ENCODE measurements at regions of chr2 and their contacts with region 1.

Region 1: DNA sequence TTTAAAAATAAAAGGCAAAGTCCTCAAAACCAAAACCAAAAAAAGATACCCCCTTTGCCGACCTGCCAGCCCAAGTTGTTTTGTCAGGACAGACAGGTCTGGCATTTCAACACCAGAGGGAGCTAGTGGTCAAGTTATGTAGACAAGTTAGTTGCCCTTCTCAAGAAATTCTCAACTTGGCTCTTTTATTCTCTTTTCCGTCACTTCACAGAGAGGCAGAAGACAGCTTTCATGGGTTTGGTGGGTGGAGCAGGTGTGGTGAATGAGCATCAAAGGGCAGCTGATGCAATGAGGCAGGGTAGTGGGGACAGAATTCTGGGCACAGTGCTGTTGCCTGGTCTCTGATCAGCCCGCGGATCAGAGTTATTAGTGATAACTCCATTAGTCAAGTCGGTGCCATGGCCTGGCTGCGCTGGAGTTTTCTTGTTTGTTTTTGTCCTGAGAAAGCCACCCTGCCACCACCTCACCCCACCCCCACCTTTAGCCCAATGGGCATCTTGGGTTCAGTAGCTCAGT is 303.7 kb upstream of the EPAS1 start:
- DNase-seq: peak in 4 of 5 donors; percentile 42 to 67 (median 50)
- ATAC-seq: peak in 3 of 4 donors; percentile 44 to 67 (median 66)
- H3K4me3 ChIP-seq: no peak overlapping the region
- H3K27ac ChIP-seq: no peak overlapping the region
- H3K4me1 ChIP-seq: peaks cover 0 to 22% (median 14%) of the 10 kb centered on the region in 12 donors
- H3K27me3 ChIP-seq: no peaks in the 10 kb centered on the region
- CTCF ChIP-seq: peak; percentile 76 to 88 (median 83)
- POLR2A ChIP-seq: no peak

Region 2: GRCh38 chr2:46461011-46461674 is 467.6 kb after region 1 on chr2:
- intact Hi-C with region 1: loop called in 8 of 10 experiments (anchors 1 to 2 kb)
- DNase-seq: peak; percentile 69 to 87 (median 78)
- ATAC-seq: peak; percentile 34 to 75 (median 58)
- H3K4me3 ChIP-seq: no peak overlapping the region
- H3K27ac ChIP-seq: peak overlapping the region; percentile 30 to 74 (median 58)
- H3K4me1 ChIP-seq: peaks cover 7 to 40% (median 20%) of the 10 kb centered on the region in 12 donors
- H3K27me3 ChIP-seq: no peaks in the 10 kb centered on the region
- CTCF ChIP-seq: peak; percentile 98 to 100 (median 99)
- POLR2A ChIP-seq: no peak

Region 3: DNA sequence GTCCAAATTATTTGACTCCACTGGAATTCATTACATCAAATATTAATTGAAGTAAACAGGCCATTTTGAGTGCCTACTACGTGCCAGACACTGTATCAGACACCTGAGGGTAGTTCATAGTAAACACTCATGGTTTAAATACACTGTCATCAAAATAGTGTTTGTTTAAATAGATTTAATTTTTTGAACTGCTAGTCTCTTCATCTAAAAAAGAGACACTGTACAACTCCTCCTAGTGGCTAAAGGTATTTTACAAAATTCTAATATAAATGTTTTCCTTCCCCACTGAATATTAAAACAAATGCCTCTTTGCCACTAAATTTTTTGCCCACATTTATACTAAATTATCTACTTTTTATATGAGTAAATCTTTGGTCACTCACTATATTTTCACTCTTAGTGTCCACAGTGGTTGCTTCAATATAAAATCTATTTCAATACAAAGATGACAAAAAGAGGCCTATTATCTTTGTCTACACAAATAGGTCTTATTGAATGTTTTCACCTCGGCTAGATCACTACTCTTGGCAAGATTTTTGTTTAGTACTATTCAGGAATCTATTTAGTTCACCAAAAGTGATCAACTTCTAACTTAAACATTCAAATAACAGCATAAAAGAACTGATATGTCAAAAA is 607.9 kb after region 1 on chr2:
- intact Hi-C with region 1: loop called in 1 of 10 experiments (anchors 10 kb)
- DNase-seq: no peak
- ATAC-seq: no peak
- H3K4me3 ChIP-seq: no peak overlapping the region
- H3K27ac ChIP-seq: no peak overlapping the region
- H3K4me1 ChIP-seq: peaks cover 0 to 5% (median 0%) of the 10 kb centered on the region in 12 donors
- H3K27me3 ChIP-seq: no peaks in the 10 kb centered on the region
- CTCF ChIP-seq: peak; percentile 34 to 65 (median 49)
- POLR2A ChIP-seq: no peak

Region 4: DNA sequence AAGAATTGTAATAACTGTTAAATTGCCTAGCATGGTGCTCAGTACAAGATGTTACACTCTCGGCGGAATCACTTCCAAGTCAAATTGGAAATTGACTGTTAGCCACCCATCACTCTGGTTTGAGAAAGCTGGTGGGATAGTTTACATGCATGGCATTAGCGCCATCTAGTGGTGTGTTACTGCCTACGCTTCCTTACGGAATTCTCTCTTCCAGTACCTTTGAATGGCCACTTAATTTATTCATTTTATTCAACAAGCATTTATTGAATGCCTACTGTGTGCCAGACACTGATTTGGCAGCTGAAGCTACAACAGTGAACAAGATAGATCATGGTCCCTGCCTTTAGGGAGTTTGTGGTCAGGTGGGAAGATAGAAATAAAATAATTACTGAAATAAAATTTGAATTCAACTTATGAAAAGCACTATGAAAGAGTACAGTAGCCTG is 657.0 kb after region 1 on chr2:
- intact Hi-C with region 1: loop called in 2 of 10 experiments (anchors 10 kb)
- DNase-seq: peak in 4 of 5 donors; percentile 57 to 70 (median 64)
- ATAC-seq: peak in 3 of 4 donors; percentile 68 to 80 (median 75)
- H3K4me3 ChIP-seq: no peak overlapping the region
- H3K27ac ChIP-seq: no peak overlapping the region
- H3K4me1 ChIP-seq: peaks cover 0 to 11% (median 6%) of the 10 kb centered on the region in 12 donors
- H3K27me3 ChIP-seq: no peaks in the 10 kb centered on the region
- CTCF ChIP-seq: peak; percentile 86 to 99 (median 96)
- POLR2A ChIP-seq: no peak

Region 5: DNA sequence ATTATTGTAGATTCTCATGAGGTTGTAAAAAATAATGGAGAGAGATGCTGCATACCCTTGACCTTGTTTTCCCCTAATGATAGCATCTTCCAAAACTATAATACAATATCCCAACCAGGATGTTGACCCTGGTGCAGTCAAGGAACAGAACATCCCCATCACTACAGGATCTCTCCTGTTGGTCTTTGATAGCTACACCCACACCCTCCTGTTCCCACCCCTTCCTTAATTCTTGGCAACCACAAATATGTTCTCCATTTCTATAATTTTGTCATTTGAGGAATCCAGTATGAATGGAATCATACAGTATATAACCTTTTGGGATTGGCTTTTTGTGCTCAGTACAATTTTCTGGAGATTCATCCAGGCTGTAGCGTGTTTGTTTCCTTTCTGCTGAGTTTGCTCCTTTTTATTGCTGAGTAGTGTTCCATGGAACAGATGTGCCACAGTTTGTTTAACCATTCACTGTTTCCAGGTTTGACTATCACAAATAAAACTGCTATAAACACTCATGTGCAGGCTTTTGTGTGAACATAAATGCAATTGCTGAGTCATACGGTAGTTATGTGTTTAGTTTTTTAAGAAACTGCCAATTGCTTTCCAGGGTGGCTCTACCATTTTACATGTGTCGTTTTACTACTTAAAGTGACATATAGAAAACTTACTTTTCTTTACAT is 899.9 kb after region 1 on chr2:
- intact Hi-C with region 1: loop called in 1 of 10 experiments (anchors 10 kb)
- DNase-seq: no peak
- ATAC-seq: peak in 1 of 4 donors; percentile 40
- H3K4me3 ChIP-seq: no peak overlapping the region
- H3K27ac ChIP-seq: no peak overlapping the region
- H3K4me1 ChIP-seq: peaks cover 0 to 7% (median 1%) of the 10 kb centered on the region in 12 donors
- H3K27me3 ChIP-seq: no peaks in the 10 kb centered on the region
- CTCF ChIP-seq: no peak
- POLR2A ChIP-seq: no peak